ENCODE measurements at regions of chrX and their contacts with region 1.

Region 1: GRCh38 chrX:108224727-108225621 is 133.4 kb downstream of the ATG4A start:
- DNase-seq: no peak
- H3K4me3 Mint-ChIP-seq: no peak overlapping the region
- H3K27ac Mint-ChIP-seq: no peak overlapping the region
- H3K4me1 Mint-ChIP-seq: no peaks in the 10 kb centered on the region
- H3K27me3 Mint-ChIP-seq: no peaks in the 10 kb centered on the region

Region 2: GRCh38 chrX:108165383-108166111 is 59.4 kb before region 1 on chrX:
- CTCF ChIA-PET with region 1: no interaction called
- POLR2A ChIA-PET with region 1: no interaction called
- intact Hi-C with region 1: no loop called
- DNase-seq: no peak
- H3K4me3 Mint-ChIP-seq: no peak overlapping the region
- H3K27ac Mint-ChIP-seq: no peak overlapping the region
- H3K4me1 Mint-ChIP-seq: no peaks in the 10 kb centered on the region
- H3K27me3 Mint-ChIP-seq: no peaks in the 10 kb centered on the region

Region 3: GRCh38 chrX:108304210-108304609 is 79.2 kb after region 1 on chrX:
- CTCF ChIA-PET with region 1: no interaction called
- POLR2A ChIA-PET with region 1: no interaction called
- intact Hi-C with region 1: loop called (anchors 5 kb)
- DNase-seq: no peak
- H3K4me3 Mint-ChIP-seq: no peak overlapping the region
- H3K27ac Mint-ChIP-seq: no peak overlapping the region
- H3K4me1 Mint-ChIP-seq: no peaks in the 10 kb centered on the region
- H3K27me3 Mint-ChIP-seq: peaks cover 4% of the 10 kb centered on the region

Region 4: GRCh38 chrX:108399427-108400162 is 174.6 kb after region 1 on chrX:
- CTCF ChIA-PET with region 1: no interaction called
- POLR2A ChIA-PET with region 1: no interaction called
- intact Hi-C with region 1: no loop called
- DNase-seq: no peak
- H3K4me3 Mint-ChIP-seq: no peak overlapping the region
- H3K27ac Mint-ChIP-seq: no peak overlapping the region
- H3K4me1 Mint-ChIP-seq: no peaks in the 10 kb centered on the region
- H3K27me3 Mint-ChIP-seq: no peaks in the 10 kb centered on the region

Region 5: DNA sequence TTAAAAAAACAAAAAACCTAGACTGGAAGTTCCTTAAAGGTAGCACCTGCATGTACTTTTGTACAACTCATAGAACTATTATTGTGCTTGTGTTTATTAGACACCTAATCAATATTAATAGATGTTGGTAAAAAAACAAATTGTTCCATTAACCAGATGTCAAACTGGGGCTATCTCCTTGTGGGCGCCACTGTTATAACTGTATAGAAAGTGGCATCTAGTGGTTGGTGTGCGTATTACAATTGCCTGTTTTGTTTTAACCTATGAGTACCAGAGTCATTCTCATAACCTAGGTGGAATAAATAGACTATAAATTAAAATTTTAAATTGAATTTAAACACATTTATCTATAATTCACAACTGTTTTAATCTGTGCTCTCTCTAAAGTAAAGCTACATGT is 312.0 kb after region 1 on chrX:
- CTCF ChIA-PET with region 1: interaction called, 6 read pairs
- POLR2A ChIA-PET with region 1: no interaction called
- intact Hi-C with region 1: loop called (anchors 1 kb)
- DNase-seq: no peak
- H3K4me3 Mint-ChIP-seq: no peak overlapping the region
- H3K27ac Mint-ChIP-seq: no peak overlapping the region
- H3K4me1 Mint-ChIP-seq: no peaks in the 10 kb centered on the region
- H3K27me3 Mint-ChIP-seq: no peaks in the 10 kb centered on the region

Region 6: DNA sequence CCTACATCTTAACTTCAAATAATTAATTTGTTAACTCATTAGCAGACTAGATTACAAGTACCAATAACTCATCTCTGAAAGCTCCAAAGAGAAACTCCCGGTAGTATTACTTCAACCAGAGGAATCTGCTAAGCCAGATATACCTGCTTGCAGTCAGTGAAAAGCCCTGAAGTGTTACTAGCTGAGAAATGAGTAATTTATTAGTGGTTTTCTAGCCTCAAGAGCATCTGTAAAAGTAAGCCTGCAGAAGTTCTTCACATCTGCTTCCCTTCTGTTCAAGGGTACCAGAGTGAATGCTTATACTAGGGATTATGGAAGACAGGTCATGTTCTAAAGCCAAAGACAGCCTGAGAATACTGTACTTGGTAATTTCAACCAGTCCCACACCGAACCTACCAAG is 476.7 kb after region 1 on chrX:
- CTCF ChIA-PET with region 1: no interaction called
- POLR2A ChIA-PET with region 1: no interaction called
- intact Hi-C with region 1: no loop called
- DNase-seq: no peak
- H3K4me3 Mint-ChIP-seq: no peak overlapping the region
- H3K27ac Mint-ChIP-seq: no peak overlapping the region
- H3K4me1 Mint-ChIP-seq: no peaks in the 10 kb centered on the region
- H3K27me3 Mint-ChIP-seq: no peaks in the 10 kb centered on the region

Region 7: GRCh38 chrX:108993909-108994308 is 768.9 kb after region 1 on chrX:
- CTCF ChIA-PET with region 1: no interaction called
- POLR2A ChIA-PET with region 1: no interaction called
- intact Hi-C with region 1: no loop called
- DNase-seq: no peak
- H3K4me3 Mint-ChIP-seq: no peak overlapping the region
- H3K27ac Mint-ChIP-seq: no peak overlapping the region
- H3K4me1 Mint-ChIP-seq: no peaks in the 10 kb centered on the region
- H3K27me3 Mint-ChIP-seq: no peaks in the 10 kb centered on the region